ENCODE measurements at regions of chr11 and their contacts with region 1.

Region 1: DNA sequence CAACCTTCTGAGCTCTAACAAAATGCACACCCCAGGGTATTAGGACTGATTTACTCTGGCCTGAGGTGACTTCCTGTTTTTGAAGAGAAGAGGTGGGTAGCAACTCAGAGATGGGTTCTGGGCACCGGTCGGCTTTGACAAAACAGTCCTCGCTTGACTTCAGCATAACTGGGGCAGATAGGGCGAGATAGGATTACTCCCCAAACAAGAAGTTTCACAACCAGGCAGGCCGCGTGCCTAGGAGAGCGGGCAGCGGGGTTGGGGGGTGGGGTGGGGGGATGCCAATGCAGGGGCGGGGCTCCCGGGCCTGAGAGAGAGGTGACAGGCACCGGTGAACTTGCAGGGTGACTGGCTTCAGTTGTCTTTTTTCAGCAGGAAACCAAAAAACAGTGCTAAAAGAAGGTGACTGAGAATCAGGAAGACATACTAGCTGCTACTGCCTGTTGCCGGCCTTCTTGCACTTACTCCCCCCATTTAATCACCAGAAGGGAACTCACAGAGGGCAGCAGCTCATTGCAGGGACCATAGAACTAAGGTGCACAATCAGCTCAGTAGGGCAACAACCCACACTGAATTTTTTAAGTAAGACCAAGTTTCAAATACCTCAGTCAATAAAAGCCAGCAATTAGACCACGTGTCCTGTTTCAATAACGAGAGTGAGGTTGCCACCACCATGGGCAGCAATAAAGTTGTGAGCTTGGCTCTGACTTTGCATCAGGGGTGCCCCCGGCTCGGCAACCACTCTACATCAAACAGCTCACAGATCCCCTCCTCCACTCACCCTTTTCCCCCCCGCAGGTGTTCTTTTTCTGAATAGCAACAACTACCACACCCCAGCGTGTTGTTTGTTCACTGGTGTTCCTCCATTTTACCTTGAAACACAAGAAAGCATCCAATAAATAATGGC is 37.2 kb upstream of the ETS1 start:
- DNase-seq: peak; percentile 24 to 25 (median 25)
- H3K4me3 ChIP-seq: peak overlapping the region in 1 of 3 experiments; percentile 32
- H3K4me3 Mint-ChIP-seq: peak overlapping the region; percentile 61 to 89
- H3K27ac ChIP-seq: no peak overlapping the region
- H3K27ac Mint-ChIP-seq: peak overlapping the region in 5 of 7 donors; percentile 6 to 78 (median 37)
- H3K4me1 ChIP-seq: peaks cover 14 to 20% of the 10 kb centered on the region in 2 donors
- H3K4me1 Mint-ChIP-seq: peaks cover 29% of the 10 kb centered on the region
- H3K27me3 ChIP-seq: no peaks in the 10 kb centered on the region
- H3K27me3 Mint-ChIP-seq: peaks cover 6 to 10% (median 7%) of the 10 kb centered on the region in 3 donors
- CTCF ChIP-seq: no peak

Region 2: DNA sequence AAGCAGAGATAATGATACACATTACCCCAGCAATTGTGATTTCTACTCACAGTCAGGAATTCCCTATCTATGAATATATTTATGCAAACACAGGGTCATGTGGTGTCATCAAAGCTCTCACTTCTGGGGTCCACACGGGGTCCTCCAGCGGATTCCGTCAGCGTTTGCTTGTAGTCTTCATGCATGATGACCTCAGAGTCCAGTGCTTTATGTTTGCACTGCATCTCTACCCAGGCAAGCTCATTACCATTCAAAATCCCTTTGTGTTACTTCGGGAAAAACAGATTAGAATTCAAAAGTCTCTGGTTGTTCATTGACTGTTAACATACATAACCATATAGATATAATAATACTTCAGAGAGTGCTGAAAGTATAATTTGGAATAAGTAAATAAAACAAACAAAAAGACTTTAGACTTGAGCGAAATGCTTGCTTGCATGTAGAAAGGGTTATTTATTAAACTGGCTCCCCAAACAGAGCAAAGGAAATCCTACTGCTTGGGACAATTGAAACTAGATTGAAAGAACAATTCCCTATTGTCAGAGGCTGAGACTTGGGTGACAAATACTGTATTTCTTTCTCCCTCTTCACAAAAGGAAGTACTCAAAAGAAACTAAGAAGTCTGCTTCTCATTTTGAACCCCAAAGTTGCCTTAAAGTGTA is 460.3 kb before region 1 on chr11:
- intact Hi-C with region 1: loop called in 1 of 2 experiments (anchors 10 kb)
- DNase-seq: no peak
- H3K4me3 ChIP-seq: no peak overlapping the region
- H3K4me3 Mint-ChIP-seq: no peak overlapping the region
- H3K27ac ChIP-seq: no peak overlapping the region
- H3K27ac Mint-ChIP-seq: no peak overlapping the region
- H3K4me1 ChIP-seq: peaks cover 18% of the 10 kb centered on the region in 2 donors
- H3K4me1 Mint-ChIP-seq: peaks cover 19% of the 10 kb centered on the region
- H3K27me3 ChIP-seq: no peaks in the 10 kb centered on the region
- H3K27me3 Mint-ChIP-seq: peaks cover 0 to 1% (median 0%) of the 10 kb centered on the region in 3 donors
- CTCF ChIP-seq: no peak

Region 3: GRCh38 chr11:128290106-128290840 is 334.2 kb before region 1 on chr11:
- intact Hi-C with region 1: loop called in 1 of 2 experiments (anchors 5 kb)
- DNase-seq: peak; percentile 52 to 66 (median 61)
- H3K4me3 ChIP-seq: no peak overlapping the region
- H3K4me3 Mint-ChIP-seq: peak overlapping the region; percentile 47 to 74
- H3K27ac ChIP-seq: no peak overlapping the region
- H3K27ac Mint-ChIP-seq: peak overlapping the region in 3 of 7 donors; percentile 5 to 77 (median 54)
- H3K4me1 ChIP-seq: peaks cover 0 to 3% of the 10 kb centered on the region in 2 donors
- H3K4me1 Mint-ChIP-seq: peaks cover 6% of the 10 kb centered on the region
- H3K27me3 ChIP-seq: no peaks in the 10 kb centered on the region
- H3K27me3 Mint-ChIP-seq: peaks cover 0 to 4% (median 2%) of the 10 kb centered on the region in 3 donors
- CTCF ChIP-seq: peak; percentile 84

Region 4: DNA sequence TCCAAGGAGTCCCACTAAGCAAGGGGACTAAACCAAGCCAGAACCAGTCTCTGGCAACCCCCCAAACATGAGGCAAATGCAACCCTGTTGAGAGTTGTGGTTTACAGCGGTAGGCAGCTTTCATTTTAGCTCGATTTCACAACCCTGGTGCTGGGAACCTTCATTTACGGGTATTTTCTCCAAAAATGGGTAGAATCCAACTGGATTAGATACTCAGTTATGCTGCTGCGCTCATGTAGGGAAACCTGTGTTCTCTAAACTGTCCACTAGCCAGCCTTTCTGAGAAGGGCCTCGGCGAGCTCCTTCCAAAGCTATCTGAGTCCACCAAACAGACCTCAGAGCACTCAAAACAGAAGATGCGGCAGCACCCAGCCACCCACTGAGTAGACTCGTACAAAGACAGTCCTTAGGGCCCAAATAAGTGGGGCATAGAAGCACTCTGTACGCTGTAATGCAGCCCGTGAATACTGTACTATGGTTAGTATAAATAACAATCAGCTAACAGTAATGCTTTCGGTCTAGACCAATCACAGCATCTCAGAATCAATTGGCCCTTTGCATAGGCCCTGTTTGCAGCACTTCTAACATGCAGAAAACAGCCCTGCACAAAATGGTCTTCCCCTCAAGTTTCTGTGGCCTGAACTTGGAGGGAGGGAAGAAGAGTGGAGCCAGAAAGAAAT is 141.9 kb before region 1 on chr11:
- intact Hi-C with region 1: no loop called
- DNase-seq: no peak
- H3K4me3 ChIP-seq: peak overlapping the region in 1 of 3 experiments; percentile 48
- H3K4me3 Mint-ChIP-seq: peak overlapping the region; percentile 48 to 49
- H3K27ac ChIP-seq: peak overlapping the region in 1 of 2 donors; percentile 63
- H3K27ac Mint-ChIP-seq: peak overlapping the region in 5 of 7 donors; percentile 2 to 74 (median 69)
- H3K4me1 ChIP-seq: peaks cover 27 to 35% of the 10 kb centered on the region in 2 donors
- H3K4me1 Mint-ChIP-seq: peaks cover 44% of the 10 kb centered on the region
- H3K27me3 ChIP-seq: no peaks in the 10 kb centered on the region
- H3K27me3 Mint-ChIP-seq: peaks cover 0 to 8% (median 0%) of the 10 kb centered on the region in 3 donors
- CTCF ChIP-seq: no peak

Region 5: GRCh38 chr11:128582496-128583366 is 41.8 kb before region 1 on chr11:
- intact Hi-C with region 1: loop called in 1 of 2 experiments (anchors 5 kb)
- DNase-seq: peak; percentile 44 to 75 (median 54)
- H3K4me3 ChIP-seq: peak overlapping the region in 1 of 3 experiments; percentile 22
- H3K4me3 Mint-ChIP-seq: peak overlapping the region; percentile 28 to 86
- H3K27ac ChIP-seq: peak overlapping the region; percentile 12 to 63
- H3K27ac Mint-ChIP-seq: peak overlapping the region; percentile 75 to 94 (median 86)
- H3K4me1 ChIP-seq: peaks cover 38 to 53% of the 10 kb centered on the region in 2 donors
- H3K4me1 Mint-ChIP-seq: peaks cover 53% of the 10 kb centered on the region
- H3K27me3 ChIP-seq: no peaks in the 10 kb centered on the region
- H3K27me3 Mint-ChIP-seq: peaks cover 0 to 4% (median 0%) of the 10 kb centered on the region in 3 donors
- CTCF ChIP-seq: no peak

Region 6: DNA sequence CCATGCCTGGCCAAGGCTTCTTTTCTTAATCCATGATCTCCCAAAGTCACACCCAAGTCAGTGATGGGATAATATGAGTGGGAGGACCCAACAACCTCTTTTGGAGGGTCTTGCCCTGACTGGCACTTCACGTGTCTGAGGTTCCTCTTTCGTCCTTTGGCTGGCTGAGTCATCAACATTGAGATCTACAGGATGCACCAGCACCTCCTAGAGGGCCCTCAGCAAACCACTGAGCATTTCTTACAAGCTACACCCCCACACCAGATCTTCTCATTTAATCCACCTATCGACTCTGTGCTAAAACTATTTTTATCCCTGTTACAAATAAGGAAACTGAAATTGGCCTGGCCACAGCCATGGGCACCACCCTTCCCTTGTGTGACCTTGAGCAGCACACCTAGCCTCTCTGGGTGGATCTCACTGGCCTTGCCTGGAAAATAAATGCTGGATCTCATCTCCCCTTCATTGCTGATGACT is 132.8 kb after region 1 on chr11:
- intact Hi-C with region 1: no loop called
- DNase-seq: peak; percentile 84 to 92 (median 92)
- H3K4me3 ChIP-seq: no peak overlapping the region
- H3K4me3 Mint-ChIP-seq: no peak overlapping the region
- H3K27ac ChIP-seq: peak overlapping the region; percentile 12 to 73
- H3K27ac Mint-ChIP-seq: peak overlapping the region; percentile 86 to 96 (median 90)
- H3K4me1 ChIP-seq: peaks cover 21 to 31% of the 10 kb centered on the region in 2 donors
- H3K4me1 Mint-ChIP-seq: peaks cover 46% of the 10 kb centered on the region
- H3K27me3 ChIP-seq: no peaks in the 10 kb centered on the region
- H3K27me3 Mint-ChIP-seq: peaks cover 0 to 2% (median 0%) of the 10 kb centered on the region in 3 donors
- CTCF ChIP-seq: peak; percentile 83